CD8-positive, alpha-beta T cell (primary cell): ENCODE measurements at regions of chr16 and their contacts with region 1.

Region 1: DNA sequence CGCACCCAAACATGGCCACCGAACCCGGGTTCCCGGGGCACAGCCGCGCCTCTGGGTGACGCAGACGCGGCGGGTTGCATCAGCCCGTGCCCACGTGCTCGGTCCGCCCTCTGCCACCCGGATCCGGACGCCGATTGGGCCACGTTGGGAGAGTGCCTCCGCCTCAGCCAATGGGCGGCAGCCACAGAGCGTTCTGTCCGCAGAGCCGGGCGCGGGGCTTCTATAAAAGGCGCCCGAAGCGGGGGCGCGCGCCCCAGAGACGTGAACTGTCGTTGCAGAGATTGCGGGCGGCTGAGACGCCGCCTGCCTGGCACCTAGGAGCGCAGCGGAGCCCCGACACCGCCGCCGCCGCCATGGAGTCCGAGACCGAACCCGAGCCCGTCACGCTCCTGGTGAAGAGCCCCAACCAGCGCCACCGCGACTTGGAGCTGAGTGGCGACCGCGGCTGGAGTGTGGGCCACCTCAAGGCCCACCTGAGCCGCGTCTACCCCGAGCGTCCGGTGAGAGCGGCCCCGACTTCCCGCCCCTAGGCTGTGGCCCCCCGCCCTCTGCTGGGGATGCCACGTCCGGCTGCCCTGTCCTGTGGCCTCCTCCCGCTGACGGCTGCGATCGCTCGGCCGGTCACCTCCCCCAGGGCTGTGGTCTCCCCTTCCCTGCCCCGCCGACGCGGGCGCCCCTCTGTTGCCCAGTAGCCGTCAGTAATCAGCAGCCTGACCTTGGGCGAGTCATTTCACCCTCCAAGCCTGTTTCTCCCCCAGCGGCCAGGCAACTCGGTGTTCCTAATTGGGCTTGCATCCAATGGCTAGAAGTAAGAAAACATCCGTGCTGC is at the start of gene HERPUD1:
- DNase-seq: peak; percentile 98 to 99 (median 99)
- ATAC-seq: peak; percentile 94
- H3K4me3 ChIP-seq: peak within 1 kb of the TSS; percentile 96 to 99
- H3K4me3 Mint-ChIP-seq: peak within 1 kb of the TSS; percentile 98
- H3K27ac ChIP-seq: peak within 1 kb of the TSS; percentile 83 to 95
- H3K27ac Mint-ChIP-seq: peak within 1 kb of the TSS; percentile 98
- H3K4me1 ChIP-seq: peaks cover 16% of the 10 kb centered on the region
- H3K4me1 Mint-ChIP-seq: peaks cover 44% of the 10 kb centered on the region
- H3K27me3 ChIP-seq: no peaks in the 10 kb centered on the region
- H3K27me3 Mint-ChIP-seq: no peaks in the 10 kb centered on the region
- CTCF ChIP-seq: no peak
- total RNA-seq, gene HERPUD1: 191 to 201 TPM

Region 2: DNA sequence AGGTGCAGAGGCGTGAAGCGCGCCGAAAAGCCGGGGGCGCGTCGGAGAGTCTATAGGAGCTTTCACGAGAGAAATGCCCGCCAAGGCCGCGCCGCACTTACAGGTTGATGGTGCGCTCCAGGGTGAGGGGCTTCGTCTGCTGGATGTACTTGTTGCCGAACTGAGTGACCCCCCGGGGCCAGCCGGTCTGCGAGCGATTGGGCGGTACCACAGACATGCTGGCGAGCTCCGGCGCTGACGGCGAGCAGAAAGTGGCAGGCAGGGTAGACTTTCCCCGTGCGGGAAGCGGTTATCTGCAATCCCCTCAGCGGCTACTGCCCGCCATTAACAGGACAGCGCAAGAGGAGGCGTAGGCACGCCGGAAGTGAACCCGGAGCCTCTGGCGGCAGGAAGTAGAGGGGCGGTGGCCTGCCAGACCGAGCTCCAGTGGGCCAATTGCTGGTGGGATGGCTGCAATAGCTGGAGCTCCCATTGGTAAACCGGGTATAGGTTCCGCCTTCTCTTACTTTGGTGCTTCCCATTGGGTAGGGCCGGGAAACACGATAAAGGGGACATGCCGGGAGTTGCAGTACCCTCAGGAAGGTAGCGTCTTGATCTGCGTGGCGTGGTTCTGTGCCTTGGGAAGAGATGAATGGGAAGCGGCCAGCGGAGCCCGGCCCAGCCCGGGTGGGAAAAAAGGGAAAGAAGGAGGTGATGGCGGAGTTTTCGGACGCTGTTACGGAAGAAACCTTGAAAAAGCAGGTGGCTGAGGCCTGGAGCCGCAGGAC is 480.9 kb before region 1 on chr16 and contains the starts of genes NUDT21 and OGFOD1:
- CTCF ChIA-PET with region 1: no interaction called
- POLR2A ChIA-PET with region 1: no interaction called
- intact Hi-C with region 1: loop called in 1 of 2 experiments (anchors 10 kb)
- DNase-seq: peak; percentile 82 to 98 (median 90)
- ATAC-seq: peak; percentile 98
- H3K4me3 ChIP-seq: peak within 1 kb of the TSS; percentile 85 to 87
- H3K4me3 Mint-ChIP-seq: peak within 1 kb of the TSS; percentile 97
- H3K27ac ChIP-seq: peak within 1 kb of the TSS; percentile 76 to 77
- H3K27ac Mint-ChIP-seq: peak within 1 kb of the TSS; percentile 94
- H3K4me1 ChIP-seq: peaks cover 31% of the 10 kb centered on the region
- H3K4me1 Mint-ChIP-seq: peaks cover 60% of the 10 kb centered on the region
- H3K27me3 ChIP-seq: no peaks in the 10 kb centered on the region
- H3K27me3 Mint-ChIP-seq: no peaks in the 10 kb centered on the region
- CTCF ChIP-seq: no peak
- total RNA-seq, gene NUDT21: 99.1 to 106 TPM
- total RNA-seq, gene OGFOD1: 17.0 to 21.5 TPM

Region 3: GRCh38 chr16:56608043-56608875 is 323.8 kb before region 1 on chr16 and contains the start of gene MT2A:
- CTCF ChIA-PET with region 1: no interaction called
- POLR2A ChIA-PET with region 1: no interaction called
- intact Hi-C with region 1: loop called in 1 of 2 experiments (anchors 2 kb)
- DNase-seq: peak; percentile 68 to 94 (median 88)
- ATAC-seq: peak; percentile 75
- H3K4me3 ChIP-seq: peak within 1 kb of the TSS; percentile 91 to 95
- H3K4me3 Mint-ChIP-seq: peak within 1 kb of the TSS; percentile 98
- H3K27ac ChIP-seq: peak within 1 kb of the TSS; percentile 68 to 98
- H3K27ac Mint-ChIP-seq: peak within 1 kb of the TSS; percentile 94
- H3K4me1 ChIP-seq: peaks cover 37% of the 10 kb centered on the region
- H3K4me1 Mint-ChIP-seq: peaks cover 47% of the 10 kb centered on the region
- H3K27me3 ChIP-seq: no peaks in the 10 kb centered on the region
- H3K27me3 Mint-ChIP-seq: no peaks in the 10 kb centered on the region
- CTCF ChIP-seq: no peak
- total RNA-seq, gene MT2A: 71.0 to 95.7 TPM

Region 4: DNA sequence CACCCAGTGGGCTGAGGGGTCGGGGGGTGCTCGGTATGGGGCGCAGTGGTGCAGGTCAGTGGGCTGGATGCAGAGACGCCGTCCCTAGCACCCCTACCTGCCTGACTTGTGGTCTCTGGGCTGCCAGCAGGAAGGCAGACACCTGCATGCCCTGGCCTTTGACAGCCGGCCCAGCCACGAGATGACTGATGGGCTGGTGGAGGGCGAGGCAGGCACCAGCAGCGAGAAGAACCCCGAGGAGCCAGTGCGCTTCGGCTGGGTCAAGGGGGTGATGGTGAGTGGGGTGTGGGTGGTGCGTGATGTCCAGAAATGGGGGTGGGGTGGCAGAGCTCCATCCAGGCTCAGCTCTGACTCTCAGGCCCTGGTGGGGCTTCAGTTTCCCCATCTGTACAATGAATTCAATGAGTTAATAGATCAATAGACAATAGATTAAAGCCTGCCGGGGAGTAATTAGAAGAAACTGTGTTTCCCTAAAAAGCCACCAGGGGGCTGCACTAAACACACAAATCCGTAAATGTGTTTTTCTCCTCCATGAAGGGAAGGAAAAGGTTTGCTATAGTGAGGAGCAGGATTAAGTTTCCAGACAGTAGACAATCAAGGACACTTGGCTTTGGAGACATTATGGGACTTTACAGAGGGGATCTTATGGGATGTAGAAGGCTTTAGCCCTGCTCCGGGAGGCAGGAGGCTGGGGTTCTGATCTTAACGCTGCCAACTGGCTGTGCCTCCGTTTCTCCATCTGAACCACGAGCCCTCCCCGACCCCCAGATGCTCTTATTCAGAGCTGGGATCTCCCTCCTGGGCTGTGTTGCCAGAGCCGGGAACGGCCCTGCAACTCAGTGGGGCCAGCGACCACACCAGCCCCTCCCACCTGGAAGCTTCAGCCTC is 64.9 kb before region 1 on chr16:
- CTCF ChIA-PET with region 1: interaction called, 6 read pairs
- POLR2A ChIA-PET with region 1: no interaction called
- intact Hi-C with region 1: loop called (anchors 1 to 5 kb)
- DNase-seq: peak in 6 of 9 experiments; percentile 11 to 73 (median 50)
- ATAC-seq: peak; percentile 58
- H3K4me3 ChIP-seq: no peak overlapping the region
- H3K4me3 Mint-ChIP-seq: no peak overlapping the region
- H3K27ac ChIP-seq: no peak overlapping the region
- H3K27ac Mint-ChIP-seq: no peak overlapping the region
- H3K4me1 ChIP-seq: peaks cover 13% of the 10 kb centered on the region
- H3K4me1 Mint-ChIP-seq: peaks cover 21% of the 10 kb centered on the region
- H3K27me3 ChIP-seq: no peaks in the 10 kb centered on the region
- H3K27me3 Mint-ChIP-seq: no peaks in the 10 kb centered on the region
- CTCF ChIP-seq: peak; percentile 82

Region 5: DNA sequence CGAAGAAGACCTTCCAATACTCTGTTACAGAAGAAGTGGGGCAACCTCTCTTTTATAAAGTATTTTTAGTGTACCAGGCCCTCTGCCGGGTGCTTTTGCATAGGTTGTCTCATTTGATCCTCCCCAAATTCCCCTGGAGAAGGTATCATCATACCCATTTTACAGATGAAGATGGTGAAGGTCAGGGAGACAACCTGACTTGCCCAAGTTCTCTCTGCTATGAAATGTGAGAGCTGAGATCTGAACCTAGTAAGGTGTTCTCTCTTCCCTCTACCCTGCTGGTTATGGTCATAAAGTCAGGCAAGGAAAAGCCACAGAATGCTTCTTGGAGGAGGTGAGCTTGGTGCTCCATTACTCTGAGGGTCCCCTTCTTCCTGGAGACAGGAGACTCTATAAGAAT is 28.2 kb before region 1 on chr16:
- CTCF ChIA-PET with region 1: no interaction called
- POLR2A ChIA-PET with region 1: no interaction called
- intact Hi-C with region 1: no loop called
- DNase-seq: no peak
- ATAC-seq: no peak
- H3K4me3 ChIP-seq: no peak overlapping the region
- H3K4me3 Mint-ChIP-seq: no peak overlapping the region
- H3K27ac ChIP-seq: no peak overlapping the region
- H3K27ac Mint-ChIP-seq: no peak overlapping the region
- H3K4me1 ChIP-seq: peaks cover 14% of the 10 kb centered on the region
- H3K4me1 Mint-ChIP-seq: peaks cover 14% of the 10 kb centered on the region
- H3K27me3 ChIP-seq: no peaks in the 10 kb centered on the region
- H3K27me3 Mint-ChIP-seq: peaks cover 2% of the 10 kb centered on the region
- CTCF ChIP-seq: no peak

Region 6: GRCh38 chr16:56944954-56945839 is 13.1 kb after region 1 on chr16:
- CTCF ChIA-PET with region 1: interaction called, 7 read pairs
- POLR2A ChIA-PET with region 1: interaction called, 30 read pairs
- intact Hi-C with region 1: no loop called
- DNase-seq: no peak
- ATAC-seq: peak; percentile 37
- H3K4me3 ChIP-seq: no peak overlapping the region
- H3K4me3 Mint-ChIP-seq: no peak overlapping the region
- H3K27ac ChIP-seq: peak overlapping the region in 1 of 2 experiments; percentile 13
- H3K27ac Mint-ChIP-seq: peak overlapping the region; percentile 71
- H3K4me1 ChIP-seq: peaks cover 2% of the 10 kb centered on the region
- H3K4me1 Mint-ChIP-seq: peaks cover 10% of the 10 kb centered on the region
- H3K27me3 ChIP-seq: no peaks in the 10 kb centered on the region
- H3K27me3 Mint-ChIP-seq: no peaks in the 10 kb centered on the region
- CTCF ChIP-seq: no peak

Region 7: DNA sequence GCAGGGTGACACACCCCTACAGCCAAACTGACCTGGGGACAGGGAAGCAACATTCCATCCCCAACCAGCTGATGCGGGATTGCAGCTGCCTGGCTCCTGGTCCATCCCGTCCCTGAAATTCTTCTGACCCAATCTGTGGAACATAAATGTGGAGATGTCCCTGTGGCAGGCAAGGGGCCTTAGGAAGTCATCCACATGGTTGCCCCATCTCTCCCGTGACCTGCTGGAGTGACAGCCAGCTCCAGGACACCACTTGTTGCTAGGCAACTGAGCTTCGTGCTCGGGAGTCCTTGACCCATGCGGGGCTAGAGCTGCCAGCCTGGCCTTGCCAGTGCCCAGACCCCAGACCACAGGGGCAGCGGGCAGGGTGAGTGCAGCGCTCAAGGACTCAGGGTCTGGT is 126.3 kb after region 1 on chr16:
- CTCF ChIA-PET with region 1: no interaction called
- POLR2A ChIA-PET with region 1: no interaction called
- intact Hi-C with region 1: no loop called
- DNase-seq: no peak
- ATAC-seq: no peak
- H3K4me3 ChIP-seq: no peak overlapping the region
- H3K4me3 Mint-ChIP-seq: no peak overlapping the region
- H3K27ac ChIP-seq: no peak overlapping the region
- H3K27ac Mint-ChIP-seq: peak overlapping the region; percentile 71
- H3K4me1 ChIP-seq: peaks cover 14% of the 10 kb centered on the region
- H3K4me1 Mint-ChIP-seq: peaks cover 34% of the 10 kb centered on the region
- H3K27me3 ChIP-seq: no peaks in the 10 kb centered on the region
- H3K27me3 Mint-ChIP-seq: no peaks in the 10 kb centered on the region
- CTCF ChIP-seq: no peak

Region 8: GRCh38 chr16:57244767-57245471 is 312.8 kb after region 1 on chr16 and contains the start of gene ARL2BP:
- CTCF ChIA-PET with region 1: no interaction called
- POLR2A ChIA-PET with region 1: no interaction called
- intact Hi-C with region 1: loop called in 1 of 2 experiments (anchors 2 kb)
- DNase-seq: peak; percentile 92 to 98 (median 97)
- ATAC-seq: peak; percentile 95
- H3K4me3 ChIP-seq: peak within 1 kb of the TSS; percentile 68 to 76
- H3K4me3 Mint-ChIP-seq: peak within 1 kb of the TSS; percentile 92
- H3K27ac ChIP-seq: peak within 1 kb of the TSS; percentile 50 to 87
- H3K27ac Mint-ChIP-seq: peak within 1 kb of the TSS; percentile 96
- H3K4me1 ChIP-seq: peaks cover 9% of the 10 kb centered on the region
- H3K4me1 Mint-ChIP-seq: peaks cover 19% of the 10 kb centered on the region
- H3K27me3 ChIP-seq: no peaks in the 10 kb centered on the region
- H3K27me3 Mint-ChIP-seq: no peaks in the 10 kb centered on the region
- CTCF ChIP-seq: no peak
- total RNA-seq, gene ARL2BP: 32.8 to 35.2 TPM